CD4-positive, alpha-beta memory T cell (primary cell): ENCODE measurements at regions of chr19 and their contacts with region 1.

Region 1: DNA sequence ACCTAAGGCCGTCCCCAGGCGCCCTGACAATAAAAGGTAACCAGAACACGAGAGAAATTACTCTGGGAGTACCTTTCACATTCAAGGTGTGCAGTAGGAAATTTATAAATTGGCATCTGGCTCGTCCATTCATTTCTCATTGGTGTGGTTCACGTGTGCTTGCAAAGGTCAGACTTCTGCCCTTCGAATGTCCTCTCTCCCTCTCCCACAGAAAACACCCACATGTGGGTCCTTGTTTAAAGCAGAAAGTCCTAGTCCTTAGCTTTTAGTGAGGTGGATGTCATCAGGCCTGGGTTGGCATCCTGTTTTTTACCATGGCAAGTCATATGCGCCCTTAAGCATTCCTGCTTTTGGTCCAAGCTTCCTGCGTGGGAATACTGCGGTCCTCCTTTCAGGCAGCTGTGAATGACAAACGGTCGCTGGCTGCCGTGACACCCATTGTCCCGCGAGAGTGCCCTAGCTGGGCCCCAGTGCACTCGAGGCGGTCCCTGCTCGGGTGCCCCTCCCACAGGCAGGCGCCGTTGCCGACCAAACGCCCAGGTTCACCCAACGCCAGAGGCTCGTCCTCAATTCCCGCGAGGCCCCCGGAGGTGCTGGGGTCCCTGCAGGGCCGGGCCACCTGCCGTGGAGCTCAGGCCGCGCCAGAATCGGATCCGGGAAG is at the start of gene NUDT19:
- DNase-seq: peak; percentile 68 to 79 (median 71)
- H3K4me3 ChIP-seq: peak within 1 kb of the TSS; percentile 85 to 89
- H3K4me3 Mint-ChIP-seq: peak within 1 kb of the TSS; percentile 91 to 94 (median 92)
- H3K27ac ChIP-seq: peak within 1 kb of the TSS; percentile 63
- H3K27ac Mint-ChIP-seq: peak within 1 kb of the TSS; percentile 80 to 96 (median 94)
- H3K4me1 ChIP-seq: peaks cover 45% of the 10 kb centered on the region
- H3K4me1 Mint-ChIP-seq: peaks cover 42 to 50% (median 45%) of the 10 kb centered on the region in 4 donors
- H3K27me3 ChIP-seq: no peaks in the 10 kb centered on the region
- H3K27me3 Mint-ChIP-seq: no peaks in the 10 kb centered on the region
- total RNA-seq, gene NUDT19: 10.5 to 10.6 TPM

Region 2: DNA sequence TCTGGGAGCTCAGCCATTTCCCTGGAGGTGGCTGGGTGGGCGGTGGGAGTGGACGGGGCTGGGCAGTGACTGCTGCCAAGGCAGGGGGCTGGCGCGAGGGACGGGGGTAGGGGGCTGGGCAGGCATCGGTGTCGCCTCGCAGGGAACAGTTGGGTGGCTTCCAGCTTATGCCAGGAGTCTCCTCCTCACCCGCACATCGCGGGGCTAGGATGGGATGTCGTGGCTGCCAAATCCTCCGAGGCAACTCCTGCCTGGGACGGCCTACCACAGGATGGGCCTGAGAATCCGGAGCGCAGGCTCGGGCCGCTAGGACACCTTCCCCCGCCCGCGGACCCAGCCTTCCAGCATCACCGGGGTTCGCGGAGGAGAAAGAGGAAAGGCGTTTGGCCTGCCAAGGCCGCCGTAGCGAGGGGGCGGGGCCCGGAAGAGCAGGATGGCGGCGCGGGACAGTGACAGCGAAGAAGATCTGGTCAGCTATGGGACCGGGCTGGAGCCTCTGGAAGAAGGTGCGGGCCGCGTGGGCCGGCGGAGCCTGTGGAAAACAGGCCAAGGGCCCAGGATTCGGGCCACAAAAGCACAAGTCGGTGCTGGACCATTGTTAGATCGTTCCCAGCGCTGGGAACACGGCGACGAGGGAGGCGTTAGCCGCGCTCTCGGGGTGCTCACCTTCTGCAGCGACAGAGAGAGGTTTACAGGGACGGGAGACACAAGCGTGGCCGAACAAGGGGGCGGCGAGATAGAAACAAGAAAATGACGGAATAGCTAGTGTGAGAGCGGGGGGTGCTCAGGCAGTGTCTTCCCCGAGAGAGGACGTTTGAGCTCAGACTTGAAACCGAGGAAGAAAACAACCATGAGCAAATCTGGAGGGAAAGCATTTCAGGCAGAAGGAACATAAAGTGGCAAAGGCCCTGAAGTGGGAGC is 389.6 kb after region 1 on chr19 and contains the start of gene GPATCH1:
- CTCF ChIA-PET with region 1: no interaction called
- POLR2A ChIA-PET with region 1: no interaction called
- intact Hi-C with region 1: loop called (anchors 5 kb)
- DNase-seq: peak; percentile 83 to 89 (median 85)
- H3K4me3 ChIP-seq: peak within 1 kb of the TSS; percentile 72 to 98
- H3K4me3 Mint-ChIP-seq: peak within 1 kb of the TSS; percentile 92 to 99 (median 96)
- H3K27ac ChIP-seq: peak within 1 kb of the TSS; percentile 75
- H3K27ac Mint-ChIP-seq: peak within 1 kb of the TSS; percentile 89 to 98 (median 95)
- H3K4me1 ChIP-seq: peaks cover 19% of the 10 kb centered on the region
- H3K4me1 Mint-ChIP-seq: peaks cover 17 to 25% (median 18%) of the 10 kb centered on the region in 4 donors
- H3K27me3 ChIP-seq: no peaks in the 10 kb centered on the region
- H3K27me3 Mint-ChIP-seq: no peaks in the 10 kb centered on the region
- total RNA-seq, gene GPATCH1: 15.5 to 16.7 TPM